GM10248 (cell line): ENCODE measurements at regions of chr22 and their contacts with region 1.

Region 1: DNA sequence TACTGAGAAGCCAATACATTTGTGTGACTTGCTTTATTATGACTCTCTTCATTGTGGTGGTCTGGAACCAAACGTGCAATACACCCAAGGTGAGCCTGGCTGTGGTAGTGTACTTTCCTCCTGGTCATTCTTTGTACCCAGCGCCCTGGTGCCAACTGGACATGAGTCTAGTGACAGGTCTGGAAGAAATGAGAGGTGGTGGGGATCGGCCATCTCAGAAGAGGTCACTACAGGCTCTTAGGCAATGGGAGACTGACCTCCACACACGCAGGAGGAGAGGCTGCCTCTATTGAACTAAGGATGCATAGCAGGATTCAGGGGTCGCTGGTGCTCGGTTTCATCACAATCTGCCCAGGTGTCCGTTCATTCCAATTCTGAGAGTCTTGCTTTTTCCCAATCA is 56.4 kb upstream of the RTL6 start:
- DNase-seq: no peak
- CTCF ChIP-seq: no peak

Region 2: GRCh38 chr22:44538051-44538450 is 16.4 kb before region 1 on chr22:
- CTCF ChIA-PET with region 1: no interaction called
- POLR2A ChIA-PET with region 1: no interaction called
- DNase-seq: no peak
- CTCF ChIP-seq: no peak

Region 3: GRCh38 chr22:44567846-44568493 is 13.6 kb after region 1 on chr22:
- CTCF ChIA-PET with region 1: interaction called, 10 read pairs
- POLR2A ChIA-PET with region 1: no interaction called
- DNase-seq: no peak
- CTCF ChIP-seq: peak; percentile 63

Region 4: DNA sequence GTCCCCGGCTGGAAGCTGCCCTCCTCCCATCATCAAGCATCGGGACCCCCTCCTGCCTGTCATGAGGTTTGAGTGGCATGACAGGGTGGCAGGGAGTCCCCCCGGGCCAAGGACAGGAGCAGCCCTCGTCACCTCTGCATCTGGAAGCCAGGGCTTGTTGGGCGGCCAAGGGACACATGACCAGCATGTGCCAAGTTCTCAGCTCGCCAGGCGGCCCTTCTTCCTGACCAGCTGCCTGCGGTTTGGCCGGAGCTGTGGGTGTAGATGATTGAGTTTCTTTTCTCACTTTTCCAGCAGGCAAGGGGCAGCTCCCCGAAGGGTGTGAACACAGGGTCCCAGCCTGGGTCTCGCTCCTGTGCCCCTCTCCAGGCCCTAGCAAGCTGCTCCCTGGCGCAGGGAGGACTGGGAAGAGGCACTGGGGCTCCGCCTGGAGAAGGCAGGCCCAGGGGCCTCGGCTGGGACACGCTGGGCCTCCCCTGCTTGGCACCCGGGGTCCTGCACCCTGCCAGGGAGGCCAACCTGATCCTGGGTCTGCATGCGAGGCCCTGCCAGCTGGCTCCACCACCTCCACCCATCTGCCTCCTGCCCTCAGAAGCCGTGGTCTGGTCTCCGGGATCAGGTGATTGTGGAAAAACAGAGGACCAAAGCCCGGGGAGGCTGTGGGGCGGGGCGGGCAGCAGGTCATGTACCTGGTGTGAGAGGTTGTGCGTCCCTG is 211.3 kb after region 1 on chr22:
- CTCF ChIA-PET with region 1: no interaction called
- POLR2A ChIA-PET with region 1: no interaction called
- DNase-seq: no peak
- CTCF ChIP-seq: no peak